ENCODE measurements at regions of chr14 and their contacts with region 1.

Region 1: DNA sequence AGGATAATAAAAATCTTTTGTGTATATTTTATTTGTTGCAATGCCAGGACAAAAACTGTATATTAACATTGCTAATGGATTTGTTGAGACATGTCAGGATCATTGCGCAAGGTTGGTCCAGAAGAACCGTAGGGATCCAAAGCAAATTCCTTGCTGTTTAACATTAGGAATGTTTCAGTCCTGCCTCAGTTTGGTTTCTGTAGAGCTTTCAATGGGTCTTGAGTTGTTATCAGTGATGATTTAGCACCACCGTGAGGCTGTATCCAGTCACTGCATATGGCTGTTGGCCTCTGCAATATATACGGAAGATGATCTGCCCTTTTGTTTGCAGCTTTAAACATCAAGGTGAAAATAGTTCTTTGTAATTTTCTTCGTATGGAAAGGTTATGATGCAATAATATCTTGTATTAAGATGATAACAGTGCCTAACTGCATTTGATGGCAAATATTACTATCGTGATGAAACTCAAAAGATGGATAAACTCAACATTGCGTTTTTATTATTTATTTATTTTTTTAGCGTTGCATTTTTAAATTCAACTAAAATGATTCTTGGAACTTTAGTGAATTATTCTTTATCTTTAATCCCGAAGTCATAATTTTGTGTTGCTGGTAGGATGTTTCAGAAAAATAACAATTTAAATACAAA is 231.2 kb downstream of the AKAP6 start:
- DNase-seq: no peak
- ATAC-seq: peak; percentile 85

Region 2: GRCh38 chr14:32494609-32495434 is 65.5 kb before region 1 on chr14:
- intact Hi-C with region 1: loop called (anchors 5 kb)
- DNase-seq: no peak
- ATAC-seq: peak; percentile 94